AG04450 (cell line): ENCODE measurements at regions of chr17 and their contacts with region 1.

Region 1: GRCh38 chr17:29645515-29646051 is 22.9 kb upstream of the CORO6 start:
- DNase-seq: peak; percentile 30
- H3K4me3 ChIP-seq: no peak overlapping the region
- H3K27ac ChIP-seq: peak overlapping the region; percentile 71
- H3K27me3 ChIP-seq: no peaks in the 10 kb centered on the region
- CTCF ChIP-seq: no peak

Region 2: DNA sequence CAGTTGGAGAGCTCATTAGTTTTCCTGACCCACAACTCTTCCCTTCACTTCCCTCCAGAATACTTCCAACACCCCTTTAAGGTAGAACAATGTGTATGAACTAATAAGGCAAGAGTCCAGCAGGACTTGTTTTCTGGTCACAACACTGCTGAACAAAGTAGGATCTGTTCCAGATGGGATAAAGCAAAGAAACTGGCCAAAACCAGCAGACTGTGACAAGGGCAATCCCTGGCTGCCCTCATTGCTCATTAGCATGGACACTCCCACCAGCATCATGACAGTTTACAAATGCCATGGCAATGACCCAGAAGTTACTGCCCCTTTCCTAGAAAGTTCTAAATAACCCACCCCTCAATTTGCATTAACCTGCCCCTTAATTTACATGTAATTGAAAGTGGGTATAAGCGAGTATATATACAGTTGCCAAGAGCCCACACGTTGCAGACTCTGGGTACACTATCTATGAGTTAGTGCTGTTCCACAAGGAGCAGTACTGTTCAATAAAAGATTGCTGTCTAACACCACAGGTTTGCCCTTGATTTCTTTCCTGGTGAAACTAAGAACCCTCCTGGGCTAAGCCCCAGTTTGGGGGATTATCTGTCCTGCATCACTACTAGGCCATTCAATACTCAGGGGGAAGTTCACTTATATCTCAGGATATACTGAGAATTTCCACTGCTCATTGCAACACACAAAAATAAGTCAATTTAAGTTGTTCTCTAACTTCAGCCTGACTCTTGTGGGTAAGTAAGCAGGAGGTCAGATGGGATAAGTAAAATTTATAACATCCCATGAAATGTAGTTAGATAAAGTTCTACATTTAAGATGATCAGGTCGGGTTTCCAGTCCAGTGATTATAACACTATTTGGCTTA is 202.2 kb after region 1 on chr17:
- CTCF ChIA-PET with region 1: no interaction called
- POLR2A ChIA-PET with region 1: interaction called, 12 read pairs
- DNase-seq: no peak
- H3K4me3 ChIP-seq: no peak overlapping the region
- H3K27ac ChIP-seq: no peak overlapping the region
- H3K27me3 ChIP-seq: no peaks in the 10 kb centered on the region
- CTCF ChIP-seq: no peak